CD8-positive, alpha-beta memory T cell (primary cell): ENCODE measurements at regions of chr1 and their contacts with region 1.

Region 1: GRCh38 chr1:160768295-160768657 is 27.7 kb upstream of the LY9 start:
- DNase-seq: peak; percentile 73 to 92 (median 82)
- H3K4me3 ChIP-seq: peak overlapping the region; percentile 69
- H3K4me3 Mint-ChIP-seq: peak overlapping the region; percentile 87 to 91 (median 88)
- H3K27ac ChIP-seq: peak overlapping the region; percentile 55
- H3K27ac Mint-ChIP-seq: peak overlapping the region; percentile 94 to 99 (median 98)
- H3K4me1 ChIP-seq: peaks cover 19% of the 10 kb centered on the region
- H3K4me1 Mint-ChIP-seq: peaks cover 22 to 23% (median 23%) of the 10 kb centered on the region in 3 donors
- H3K27me3 ChIP-seq: no peaks in the 10 kb centered on the region
- H3K27me3 Mint-ChIP-seq: peaks cover 0 to 3% of the 10 kb centered on the region in 2 donors

Region 2: GRCh38 chr1:160675641-160676410 is 92.5 kb before region 1 on chr1:
- CTCF ChIA-PET with region 1: interaction called, 100 read pairs
- POLR2A ChIA-PET with region 1: interaction called, 5 read pairs
- DNase-seq: peak; percentile 58 to 84 (median 60)
- H3K4me3 ChIP-seq: no peak overlapping the region
- H3K4me3 Mint-ChIP-seq: peak overlapping the region in 2 of 7 donors; percentile 24 to 63
- H3K27ac ChIP-seq: no peak overlapping the region
- H3K27ac Mint-ChIP-seq: peak overlapping the region in 7 of 8 donors; percentile 58 to 87 (median 82)
- H3K4me1 ChIP-seq: peaks cover 42% of the 10 kb centered on the region
- H3K4me1 Mint-ChIP-seq: peaks cover 19 to 35% (median 23%) of the 10 kb centered on the region in 3 donors
- H3K27me3 ChIP-seq: no peaks in the 10 kb centered on the region
- H3K27me3 Mint-ChIP-seq: no peaks in the 10 kb centered on the region

Region 3: DNA sequence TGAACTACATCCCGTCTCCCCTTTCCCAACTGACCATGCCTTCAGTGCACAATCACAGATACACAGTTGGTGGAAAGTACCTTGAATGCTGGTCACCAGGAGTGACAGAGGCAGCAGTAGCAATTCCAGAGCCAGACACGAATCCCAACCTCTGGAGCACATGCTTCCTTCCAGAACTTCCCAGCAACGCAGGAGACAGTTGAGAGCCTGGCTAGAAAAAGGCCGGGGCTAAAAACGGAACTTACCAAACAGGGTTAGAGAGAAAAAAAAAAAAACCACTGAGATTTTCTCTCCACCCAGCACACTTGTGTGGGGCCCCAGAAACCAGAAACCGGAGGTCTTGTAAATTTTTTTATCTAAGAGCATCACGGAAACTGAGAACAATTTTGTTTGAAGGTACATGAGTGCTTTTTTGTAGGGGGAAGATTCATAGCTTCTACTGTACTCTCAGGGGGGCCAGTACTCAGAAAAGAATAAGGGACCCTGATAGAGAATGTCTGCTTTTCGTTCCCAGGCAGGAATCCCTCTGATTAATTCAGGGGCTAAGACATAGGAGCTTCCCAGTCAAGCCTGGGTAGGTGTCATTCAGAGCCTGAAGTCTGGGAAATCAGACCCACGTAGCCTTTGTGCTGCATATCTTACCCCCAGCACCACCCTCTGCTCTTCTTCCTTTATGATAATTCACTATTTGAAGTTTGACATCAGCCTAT is 56.5 kb before region 1 on chr1 and contains the start of gene CD48:
- CTCF ChIA-PET with region 1: interaction called, 18 read pairs
- POLR2A ChIA-PET with region 1: interaction called, 5 read pairs
- DNase-seq: peak; percentile 27 to 86 (median 78)
- H3K4me3 ChIP-seq: peak within 1 kb of the TSS; percentile 88
- H3K4me3 Mint-ChIP-seq: no peak within 1 kb of the TSS
- H3K27ac ChIP-seq: peak within 1 kb of the TSS; percentile 56
- H3K27ac Mint-ChIP-seq: peak within 1 kb of the TSS in 1 of 8 donors; percentile 89
- H3K4me1 ChIP-seq: peaks cover 70% of the 10 kb centered on the region
- H3K4me1 Mint-ChIP-seq: peaks cover 35 to 49% (median 47%) of the 10 kb centered on the region in 3 donors
- H3K27me3 ChIP-seq: no peaks in the 10 kb centered on the region
- H3K27me3 Mint-ChIP-seq: no peaks in the 10 kb centered on the region
- total RNA-seq, gene CD48: 224 to 234 TPM

Region 4: DNA sequence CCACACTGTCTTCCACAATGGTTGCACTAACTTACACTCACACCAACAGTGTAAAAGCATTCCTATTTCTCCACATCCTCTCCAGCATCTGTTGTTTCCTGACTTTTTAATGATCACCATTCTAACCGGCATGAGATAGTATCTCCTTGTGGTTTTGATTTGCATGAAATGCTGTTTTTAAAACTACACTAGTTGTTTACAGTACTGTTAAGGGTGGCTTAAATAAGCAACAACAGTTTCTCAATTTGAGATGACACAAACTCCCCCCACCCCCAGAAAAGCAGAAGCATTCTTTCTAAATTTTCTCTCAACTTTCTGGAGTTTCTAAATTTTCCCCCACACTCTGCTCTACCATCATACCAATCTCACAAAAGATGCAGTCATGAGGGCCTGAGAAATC is 36.3 kb before region 1 on chr1:
- CTCF ChIA-PET with region 1: interaction called, 185 read pairs
- POLR2A ChIA-PET with region 1: interaction called, 7 read pairs
- DNase-seq: no peak
- H3K4me3 ChIP-seq: no peak overlapping the region
- H3K4me3 Mint-ChIP-seq: no peak overlapping the region
- H3K27ac ChIP-seq: no peak overlapping the region
- H3K27ac Mint-ChIP-seq: peak overlapping the region in 1 of 8 donors; percentile 87
- H3K4me1 ChIP-seq: peaks cover 19% of the 10 kb centered on the region
- H3K4me1 Mint-ChIP-seq: peaks cover 34 to 38% (median 37%) of the 10 kb centered on the region in 3 donors
- H3K27me3 ChIP-seq: no peaks in the 10 kb centered on the region
- H3K27me3 Mint-ChIP-seq: no peaks in the 10 kb centered on the region

Region 5: GRCh38 chr1:160748181-160748877 is 19.9 kb before region 1 on chr1:
- CTCF ChIA-PET with region 1: interaction called, 66 read pairs
- POLR2A ChIA-PET with region 1: interaction called, 9 read pairs
- DNase-seq: no peak
- H3K4me3 ChIP-seq: no peak overlapping the region
- H3K4me3 Mint-ChIP-seq: peak overlapping the region in 5 of 7 donors; percentile 20 to 78 (median 35)
- H3K27ac ChIP-seq: no peak overlapping the region
- H3K27ac Mint-ChIP-seq: peak overlapping the region; percentile 28 to 91 (median 88)
- H3K4me1 ChIP-seq: peaks cover 85% of the 10 kb centered on the region
- H3K4me1 Mint-ChIP-seq: peaks cover 93 to 100% (median 95%) of the 10 kb centered on the region in 3 donors
- H3K27me3 ChIP-seq: no peaks in the 10 kb centered on the region
- H3K27me3 Mint-ChIP-seq: no peaks in the 10 kb centered on the region

Region 6: DNA sequence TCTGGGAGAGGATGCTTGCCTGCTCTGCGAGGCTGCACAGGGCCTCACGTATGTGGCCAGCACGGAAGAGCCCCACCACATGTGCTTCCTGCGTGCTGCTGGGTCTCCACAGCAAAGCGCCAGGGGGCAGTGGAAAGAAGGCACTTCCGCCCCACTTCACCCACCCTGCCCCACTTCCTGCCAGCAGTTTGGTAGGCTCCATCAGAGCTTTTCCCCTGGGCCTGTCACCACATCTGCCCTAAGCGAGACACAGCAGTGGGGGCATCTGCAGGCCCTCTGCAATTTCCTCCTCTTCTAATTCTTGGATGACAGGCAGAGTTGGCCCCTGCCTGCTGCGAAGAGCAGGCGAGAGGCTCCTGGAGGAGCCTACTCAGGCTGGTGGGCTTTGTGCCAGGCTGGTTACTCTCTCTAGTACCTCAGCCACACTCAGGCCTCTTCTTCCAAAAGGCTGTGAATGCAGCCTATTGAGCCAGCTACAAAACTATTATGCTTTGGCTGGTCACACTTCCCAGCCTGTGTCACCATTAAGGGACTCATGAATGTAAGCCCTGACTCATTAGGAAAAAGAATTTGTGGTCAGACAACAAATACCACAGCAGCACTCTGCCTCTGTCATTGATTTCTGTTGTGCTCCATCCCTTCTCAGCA is 69.4 kb after region 1 on chr1:
- CTCF ChIA-PET with region 1: interaction called, 20 read pairs
- POLR2A ChIA-PET with region 1: interaction called, 3 read pairs
- DNase-seq: peak; percentile 74 to 93 (median 89)
- H3K4me3 ChIP-seq: peak overlapping the region; percentile 38
- H3K4me3 Mint-ChIP-seq: peak overlapping the region; percentile 63 to 90 (median 83)
- H3K27ac ChIP-seq: peak overlapping the region; percentile 41
- H3K27ac Mint-ChIP-seq: peak overlapping the region; percentile 88 to 98 (median 96)
- H3K4me1 ChIP-seq: peaks cover 71% of the 10 kb centered on the region
- H3K4me1 Mint-ChIP-seq: peaks cover 77 to 91% (median 90%) of the 10 kb centered on the region in 3 donors
- H3K27me3 ChIP-seq: no peaks in the 10 kb centered on the region
- H3K27me3 Mint-ChIP-seq: no peaks in the 10 kb centered on the region